ENCODE measurements at regions of chr4 and their contacts with region 1.

Region 1: DNA sequence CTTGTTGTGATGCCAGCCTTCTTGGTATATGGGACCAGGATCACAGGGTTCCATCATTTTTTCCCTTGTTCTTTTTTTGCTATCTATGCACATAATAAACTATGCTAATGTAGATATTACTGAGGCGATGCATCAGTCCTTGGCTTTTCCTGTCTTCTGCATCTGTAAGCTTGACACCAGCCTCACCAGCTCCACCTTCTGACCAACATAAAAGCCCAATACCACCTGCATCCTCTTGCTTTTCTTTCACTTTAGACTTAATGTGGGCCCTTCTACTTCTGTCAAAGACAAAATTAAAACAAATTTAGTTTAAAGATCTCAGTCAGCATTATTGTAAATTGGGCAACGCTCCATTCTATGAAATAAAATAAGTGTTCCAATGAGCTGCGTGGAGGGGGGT is 1718.8 kb upstream of the PCDH10 start:
- DNase-seq: no peak
- H3K4me3 ChIP-seq: no peak overlapping the region
- H3K27ac ChIP-seq: no peak overlapping the region
- H3K4me1 ChIP-seq: no peaks in the 10 kb centered on the region
- H3K27me3 ChIP-seq: no peaks in the 10 kb centered on the region
- CTCF ChIP-seq: no peak
- POLR2A ChIP-seq: no peak

Region 2: DNA sequence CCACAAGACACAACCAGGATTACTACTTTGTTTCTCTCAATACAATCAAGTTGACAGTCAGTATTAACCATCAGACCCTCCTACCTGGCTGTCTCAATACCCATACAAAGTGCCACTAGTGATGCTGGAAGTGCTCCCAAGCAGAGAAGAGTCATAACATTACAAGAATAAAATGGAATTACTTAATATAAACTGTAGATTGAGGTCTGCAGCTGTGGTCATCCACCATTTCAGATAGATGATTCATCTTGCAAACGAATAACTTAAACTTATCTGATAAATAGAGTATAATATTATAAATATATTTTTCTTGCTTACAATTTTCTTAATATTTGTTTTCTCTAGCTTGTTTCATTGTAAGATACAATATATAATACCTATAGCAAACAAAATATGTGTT is 684.6 kb after region 1 on chr4:
- intact Hi-C with region 1: loop called (anchors 5 kb)
- DNase-seq: no peak
- H3K4me3 ChIP-seq: no peak overlapping the region
- H3K27ac ChIP-seq: no peak overlapping the region
- H3K4me1 ChIP-seq: no peaks in the 10 kb centered on the region
- H3K27me3 ChIP-seq: no peaks in the 10 kb centered on the region
- CTCF ChIP-seq: no peak
- POLR2A ChIP-seq: no peak

Measured in breast epithelium (tissue), 4 donors.